ENCODE measurements at regions of chr2 and their contacts with region 1.

Region 1: DNA sequence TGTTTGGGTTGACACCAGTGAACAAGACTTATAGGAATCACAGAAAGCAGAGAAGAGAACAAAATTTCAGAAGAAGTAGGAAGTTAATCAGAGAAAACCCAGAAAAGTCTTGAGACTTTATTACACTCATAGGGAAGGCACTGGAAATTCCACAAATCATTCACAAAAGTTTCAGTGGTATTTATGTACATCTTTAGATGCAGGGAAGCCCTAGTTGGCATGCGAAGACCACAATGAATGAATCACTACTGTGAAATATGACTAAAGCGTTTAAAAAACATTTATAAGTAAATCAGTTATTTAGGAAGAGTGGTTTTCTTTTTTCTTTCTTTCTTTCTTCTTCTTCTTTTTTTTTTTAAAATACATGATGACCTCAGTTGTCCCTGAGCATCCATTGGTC is 105.1 kb downstream of the NUP35 start:
- DNase-seq: no peak
- ATAC-seq: no peak
- H3K4me3 ChIP-seq: no peak overlapping the region
- H3K27ac ChIP-seq: no peak overlapping the region
- H3K4me1 ChIP-seq: no peaks in the 10 kb centered on the region
- H3K27me3 ChIP-seq: no peaks in the 10 kb centered on the region
- CTCF ChIP-seq: no peak
- EP300 ChIP-seq: no peak
- POLR2A ChIP-seq: no peak
- RAD21 ChIP-seq: no peak

Region 2: GRCh38 chr2:183269956-183270355 is 40.6 kb after region 1 on chr2:
- CTCF ChIA-PET with region 1: no interaction called
- POLR2A ChIA-PET with region 1: no interaction called
- in situ Hi-C with region 1: no loop called
- intact Hi-C with region 1: loop called (anchors 1 kb)
- DNase-seq: no peak
- ATAC-seq: no peak
- H3K4me3 ChIP-seq: no peak overlapping the region
- H3K27ac ChIP-seq: no peak overlapping the region
- H3K4me1 ChIP-seq: no peaks in the 10 kb centered on the region
- H3K27me3 ChIP-seq: no peaks in the 10 kb centered on the region
- CTCF ChIP-seq: no peak
- EP300 ChIP-seq: no peak
- POLR2A ChIP-seq: no peak
- RAD21 ChIP-seq: no peak